ENCODE measurements at regions of chr7 and their contacts with region 1.

Region 1: DNA sequence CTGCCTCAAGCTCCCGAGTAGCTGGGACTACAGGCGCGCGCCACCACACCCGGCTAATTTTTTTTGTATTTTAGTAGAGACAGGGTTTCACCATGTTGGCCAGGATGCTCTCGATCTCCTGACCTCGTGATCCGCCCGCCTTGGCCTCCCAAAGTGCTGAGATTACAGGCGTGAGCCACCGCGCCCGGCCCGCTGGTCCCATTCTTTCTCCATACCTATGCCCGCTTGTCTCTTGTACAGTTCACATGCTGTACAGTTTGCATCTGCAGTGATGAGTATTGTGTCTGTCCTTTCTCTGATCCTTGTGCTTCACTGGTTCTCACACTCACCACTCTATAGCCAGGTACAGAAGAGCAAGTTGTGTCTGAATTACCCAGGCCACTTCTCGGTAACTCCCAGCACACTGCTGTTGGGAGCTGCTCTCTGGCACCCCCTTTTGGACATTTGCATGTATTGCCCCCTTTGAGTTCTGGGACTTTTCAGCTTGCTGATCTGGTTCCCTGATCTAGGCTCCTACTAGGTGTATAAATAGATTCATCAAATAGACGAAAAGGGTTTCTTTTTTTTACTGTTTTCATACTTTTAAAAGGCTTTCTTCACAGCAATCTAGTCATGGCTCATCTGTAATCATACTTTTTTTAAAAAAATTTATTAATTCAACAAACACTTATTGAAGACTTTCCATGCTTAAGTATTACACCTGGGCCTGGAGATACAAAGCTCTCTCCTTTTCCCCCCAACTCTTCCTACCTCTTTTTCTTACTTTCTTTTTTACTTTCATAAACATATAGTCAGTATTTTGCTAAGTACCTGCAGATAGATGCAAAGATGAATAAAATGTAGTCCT is 53.5 kb downstream of the AOAH start:
- DNase-seq: peak in 1 of 2 donors; percentile 28
- H3K4me3 ChIP-seq: no peak overlapping the region
- H3K27ac ChIP-seq: no peak overlapping the region
- H3K4me1 ChIP-seq: no peaks in the 10 kb centered on the region
- H3K27me3 ChIP-seq: no peaks in the 10 kb centered on the region
- CTCF ChIP-seq: peak; percentile 53 to 73

Region 2: DNA sequence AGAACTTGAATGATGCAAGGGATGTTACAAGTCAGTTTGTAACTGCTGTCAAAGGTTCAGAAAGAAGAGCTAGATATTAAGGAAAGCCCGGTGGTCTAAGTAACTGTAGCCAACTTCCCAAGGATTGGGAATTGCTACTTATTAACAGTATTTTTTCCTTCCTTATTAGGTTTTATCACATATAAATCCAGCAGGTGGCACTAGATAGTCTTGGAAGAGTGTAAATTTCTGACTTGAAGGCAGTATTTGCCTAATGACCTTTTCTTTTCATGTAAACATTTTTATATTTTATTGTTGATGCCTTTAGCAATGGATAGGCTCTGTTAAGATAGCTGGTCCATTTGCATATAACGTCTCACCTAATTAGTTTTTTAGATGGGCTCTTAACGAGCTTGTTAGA is 229.9 kb before region 1 on chr7:
- intact Hi-C with region 1: loop called (anchors 10 kb)
- DNase-seq: no peak
- H3K4me3 ChIP-seq: no peak overlapping the region
- H3K27ac ChIP-seq: no peak overlapping the region
- H3K4me1 ChIP-seq: no peaks in the 10 kb centered on the region
- H3K27me3 ChIP-seq: no peaks in the 10 kb centered on the region
- CTCF ChIP-seq: peak; percentile 36 to 40

Measured in tibial artery (tissue), 4 donors.